A673 (cell line): ENCODE measurements at regions of chr2 and their contacts with region 1.

Region 1: DNA sequence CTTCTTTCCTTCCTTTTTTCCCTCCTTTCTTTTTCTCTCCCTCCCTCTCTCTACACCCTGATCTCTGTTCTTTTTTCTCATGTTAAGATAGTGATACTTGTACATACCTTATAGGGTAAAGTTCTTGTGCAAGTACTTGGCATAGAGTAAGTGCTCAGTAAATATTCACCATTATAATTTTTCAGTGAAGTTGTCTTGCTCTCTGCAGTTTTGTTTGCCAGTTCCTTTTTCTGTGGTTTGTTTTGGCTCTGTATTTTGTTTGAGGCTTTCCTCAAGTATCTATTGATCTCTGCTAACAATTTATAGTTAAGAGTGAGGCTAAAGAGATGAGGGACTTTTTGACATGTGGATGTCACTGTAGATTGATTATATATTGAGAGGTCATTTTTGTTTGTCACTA is 48.0 kb downstream of the MTX2 start:
- DNase-seq: no peak
- H3K4me3 ChIP-seq: no peak overlapping the region
- H3K27ac ChIP-seq: no peak overlapping the region
- H3K4me1 ChIP-seq: no peaks in the 10 kb centered on the region
- H3K27me3 ChIP-seq: no peaks in the 10 kb centered on the region
- CTCF ChIP-seq: no peak

Region 2: GRCh38 chr2:176177580-176178037 is 139.6 kb before region 1 on chr2:
- CTCF ChIA-PET with region 1: no interaction called
- POLR2A ChIA-PET with region 1: interaction called, 13 read pairs
- intact Hi-C with region 1: no loop called
- DNase-seq: no peak
- H3K4me3 ChIP-seq: peak overlapping the region; percentile 50
- H3K27ac ChIP-seq: no peak overlapping the region
- H3K4me1 ChIP-seq: peaks cover 36% of the 10 kb centered on the region
- H3K27me3 ChIP-seq: no peaks in the 10 kb centered on the region
- CTCF ChIP-seq: no peak

Region 3: GRCh38 chr2:176364273-176364977 is 47.2 kb after region 1 on chr2:
- CTCF ChIA-PET with region 1: no interaction called
- POLR2A ChIA-PET with region 1: no interaction called
- intact Hi-C with region 1: no loop called
- DNase-seq: no peak
- H3K4me3 ChIP-seq: no peak overlapping the region
- H3K27ac ChIP-seq: no peak overlapping the region
- H3K4me1 ChIP-seq: no peaks in the 10 kb centered on the region
- H3K27me3 ChIP-seq: no peaks in the 10 kb centered on the region
- CTCF ChIP-seq: no peak

Region 4: GRCh38 chr2:176682278-176682677 is 365.1 kb after region 1 on chr2:
- CTCF ChIA-PET with region 1: no interaction called
- POLR2A ChIA-PET with region 1: no interaction called
- intact Hi-C with region 1: no loop called
- DNase-seq: peak; percentile 77
- H3K4me3 ChIP-seq: no peak overlapping the region
- H3K27ac ChIP-seq: peak overlapping the region; percentile 91
- H3K4me1 ChIP-seq: peaks cover 92% of the 10 kb centered on the region
- H3K27me3 ChIP-seq: no peaks in the 10 kb centered on the region
- CTCF ChIP-seq: no peak